Natural killer cell (primary cell): ENCODE measurements at regions of chr9 and their contacts with region 1.

Region 1: DNA sequence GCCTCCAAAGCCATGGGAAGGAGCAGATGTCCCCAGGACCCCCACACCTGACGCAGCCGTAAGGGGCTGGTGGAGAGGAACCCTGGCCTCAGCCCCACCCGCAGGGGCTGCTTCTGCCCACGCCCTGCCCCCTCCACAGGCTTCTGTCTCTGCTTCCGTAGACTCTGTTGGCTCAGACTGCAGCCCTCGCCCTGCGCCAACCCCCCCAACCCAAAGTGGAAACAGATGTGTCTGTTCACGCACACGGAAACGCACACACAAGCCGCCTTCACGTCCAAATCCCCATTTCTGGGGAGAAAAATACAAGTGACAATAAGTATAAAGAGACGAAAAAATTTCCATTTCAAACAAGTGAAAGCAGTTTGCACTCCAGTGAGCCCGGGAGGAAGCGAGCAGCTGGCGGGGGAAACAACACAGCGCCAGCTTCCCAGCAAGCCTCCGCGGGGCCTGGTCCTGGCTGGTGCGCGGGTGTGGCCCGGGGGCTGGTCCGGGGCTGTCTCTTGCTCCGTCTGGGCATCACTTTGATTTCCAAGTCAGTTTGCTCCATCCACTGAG is 32.6 kb upstream of the RXRA start:
- DNase-seq: peak in 1 of 2 donors; percentile 15
- ATAC-seq: peak in 1 of 3 donors; percentile 24
- H3K4me3 ChIP-seq: no peak overlapping the region
- H3K4me3 Mint-ChIP-seq: no peak overlapping the region
- H3K27ac ChIP-seq: no peak overlapping the region
- H3K27ac Mint-ChIP-seq: no peak overlapping the region
- H3K4me1 ChIP-seq: peaks cover 30% of the 10 kb centered on the region
- H3K4me1 Mint-ChIP-seq: peaks cover 10 to 16% of the 10 kb centered on the region in 2 donors
- H3K27me3 ChIP-seq: peaks cover 5% of the 10 kb centered on the region
- H3K27me3 Mint-ChIP-seq: peaks cover 8 to 13% of the 10 kb centered on the region in 2 donors
- CTCF ChIP-seq: no peak

Region 2: DNA sequence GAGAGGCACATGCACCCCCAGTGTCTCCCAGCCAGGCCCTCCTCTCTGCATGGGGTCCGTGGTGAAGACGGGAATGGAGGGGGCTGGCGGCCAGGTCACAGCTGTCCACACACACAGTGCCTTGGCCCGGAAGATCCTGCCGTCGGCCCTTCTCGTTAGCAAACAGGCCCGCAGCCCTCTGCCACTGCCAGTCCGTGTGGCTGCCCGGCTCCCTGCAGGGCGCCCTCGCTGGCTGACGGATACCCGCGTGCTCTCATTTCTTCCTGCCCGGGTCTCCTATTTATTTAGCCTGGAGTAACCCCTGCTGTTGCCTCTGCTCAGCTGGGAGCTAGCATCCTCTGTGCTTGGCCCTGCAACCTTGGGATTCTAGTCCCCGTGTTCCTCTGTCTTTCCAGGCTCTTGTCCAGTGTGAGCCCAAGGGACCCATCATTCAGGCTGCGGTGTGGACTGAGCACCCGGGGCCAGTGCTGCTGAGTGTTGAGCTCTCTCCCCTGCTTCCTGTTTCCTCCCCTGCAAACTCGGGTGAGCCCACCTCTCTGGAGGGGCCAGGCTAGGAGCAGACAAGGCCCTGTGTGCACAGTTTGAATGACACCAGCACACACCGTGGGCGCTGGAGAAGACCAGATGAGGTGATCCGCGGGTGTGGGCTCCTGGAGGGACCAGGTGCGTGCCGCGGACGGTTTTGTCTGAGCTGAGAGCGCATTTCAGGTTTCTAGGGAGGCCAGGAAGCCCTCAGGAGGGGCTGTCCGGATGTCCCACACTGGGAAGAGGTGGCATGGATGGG is 114.7 kb before region 1 on chr9:
- intact Hi-C with region 1: loop called (anchors 10 kb)
- DNase-seq: no peak
- ATAC-seq: no peak
- H3K4me3 ChIP-seq: no peak overlapping the region
- H3K4me3 Mint-ChIP-seq: peak overlapping the region; percentile 15
- H3K27ac ChIP-seq: no peak overlapping the region
- H3K27ac Mint-ChIP-seq: peak overlapping the region in 1 of 2 donors; percentile 39
- H3K4me1 ChIP-seq: peaks cover 54% of the 10 kb centered on the region
- H3K4me1 Mint-ChIP-seq: peaks cover 34 to 42% of the 10 kb centered on the region in 2 donors
- H3K27me3 ChIP-seq: no peaks in the 10 kb centered on the region
- H3K27me3 Mint-ChIP-seq: peaks cover 0 to 24% of the 10 kb centered on the region in 2 donors
- CTCF ChIP-seq: no peak